ENCODE measurements at regions of chr4 and their contacts with region 1.

Region 1: GRCh38 chr4:166088576-166088975 is 215.5 kb downstream of the TLL1 start:
- DNase-seq: no peak
- H3K4me3 ChIP-seq: no peak overlapping the region
- H3K27ac ChIP-seq: no peak overlapping the region
- H3K4me1 ChIP-seq: no peaks in the 10 kb centered on the region
- H3K27me3 ChIP-seq: no peaks in the 10 kb centered on the region
- CTCF ChIP-seq: no peak
- EP300 ChIP-seq: no peak
- POLR2A ChIP-seq: no peak

Region 2: DNA sequence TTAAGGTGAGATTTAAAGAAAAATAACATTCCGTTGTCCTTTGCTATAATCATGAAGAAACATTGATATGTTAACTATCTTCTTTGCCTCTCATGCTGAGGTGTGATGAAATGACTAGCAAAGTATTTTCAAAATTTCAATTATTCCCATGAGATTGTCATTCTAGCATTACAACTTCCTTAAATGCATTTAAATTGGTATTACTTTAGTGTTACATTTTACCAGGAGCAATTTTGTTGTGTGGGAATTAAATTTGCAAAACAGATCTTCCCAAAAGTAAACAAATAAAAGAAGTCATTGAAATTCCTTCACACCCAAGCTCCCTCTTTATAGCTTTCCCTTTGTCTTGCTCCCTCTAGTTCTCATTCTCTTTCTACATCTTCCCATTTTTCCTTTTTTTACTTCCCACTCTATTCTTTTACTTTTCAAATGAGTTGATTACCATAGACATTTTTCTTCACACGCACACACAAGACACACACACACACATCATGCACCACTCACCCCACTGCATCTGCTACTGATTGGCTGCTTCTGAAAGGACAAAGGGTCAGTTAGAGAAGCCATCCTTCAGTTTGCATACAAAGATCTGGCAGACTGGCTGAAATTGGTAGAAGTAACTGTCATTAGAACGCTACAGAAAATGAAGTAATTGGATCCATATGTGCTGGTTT is 1221.6 kb before region 1 on chr4:
- intact Hi-C with region 1: no loop called
- DNase-seq: no peak
- H3K4me3 ChIP-seq: no peak overlapping the region
- H3K27ac ChIP-seq: no peak overlapping the region
- H3K4me1 ChIP-seq: no peaks in the 10 kb centered on the region
- H3K27me3 ChIP-seq: no peaks in the 10 kb centered on the region
- CTCF ChIP-seq: no peak
- EP300 ChIP-seq: no peak
- POLR2A ChIP-seq: no peak

Region 3: GRCh38 chr4:165537028-165537648 is 551.4 kb before region 1 on chr4:
- intact Hi-C with region 1: loop called in 2 of 4 experiments (anchors 5 to 10 kb)
- DNase-seq: no peak
- H3K4me3 ChIP-seq: no peak overlapping the region
- H3K27ac ChIP-seq: no peak overlapping the region
- H3K4me1 ChIP-seq: no peaks in the 10 kb centered on the region
- H3K27me3 ChIP-seq: no peaks in the 10 kb centered on the region
- CTCF ChIP-seq: peak in 2 of 3 donors; percentile 30 to 45
- EP300 ChIP-seq: no peak
- POLR2A ChIP-seq: no peak